ENCODE measurements at regions of chrX and their contacts with region 1.

Region 1: DNA sequence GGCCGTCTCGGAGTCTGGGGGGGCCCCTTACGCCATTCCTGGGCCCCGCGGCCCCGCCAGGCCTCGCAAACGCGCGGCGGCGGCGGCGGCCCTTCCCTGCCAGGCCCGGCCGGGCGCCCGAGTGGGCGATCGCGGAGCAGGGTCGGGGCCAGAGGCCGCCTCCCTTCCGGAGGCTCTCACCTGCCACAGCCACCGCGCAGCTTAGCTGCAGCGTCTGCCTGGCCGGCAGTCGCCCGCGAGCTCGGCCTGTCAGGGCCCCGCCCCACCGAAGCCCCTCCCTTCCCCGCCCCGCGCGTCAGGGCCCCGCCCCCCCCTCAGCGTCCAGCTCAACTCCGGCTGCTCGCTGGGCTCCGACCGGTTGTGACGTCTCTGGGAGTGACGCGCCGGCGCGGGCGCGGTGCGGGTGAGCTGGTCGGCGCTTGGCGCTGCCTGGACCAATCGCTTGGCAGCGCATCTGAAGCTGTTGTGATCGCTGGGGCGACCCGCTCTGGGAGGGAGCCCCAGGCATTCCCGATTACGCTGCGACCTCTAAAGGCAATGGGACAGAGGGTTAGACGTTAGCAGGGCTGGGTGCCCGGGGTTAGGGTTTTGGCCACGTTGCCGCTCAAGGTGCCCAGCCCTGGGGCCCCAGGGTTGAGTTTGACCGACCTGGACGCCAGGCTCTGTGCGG is at the start of gene SLC10A3:
- DNase-seq: peak; percentile 67
- ATAC-seq: peak; percentile 91
- H3K4me3 ChIP-seq: peak within 1 kb of the TSS; percentile 74
- H3K27ac ChIP-seq: peak within 1 kb of the TSS; percentile 76
- H3K4me1 ChIP-seq: peaks cover under 1% of the 10 kb centered on the region; the same call in 1 of the 2 replicates
- H3K27me3 ChIP-seq: no peaks in the 10 kb centered on the region
- CTCF ChIP-seq: peak in 1 of 3 experiments; percentile 19; a peak in 1 of 6 replicates
- EP300 ChIP-seq: no peak
- POLR2A ChIP-seq: peak; percentile 92
- RAD21 ChIP-seq: no peak
- polyA plus RNA-seq, gene SLC10A3: 1.7 to 3.6 TPM

Region 2: DNA sequence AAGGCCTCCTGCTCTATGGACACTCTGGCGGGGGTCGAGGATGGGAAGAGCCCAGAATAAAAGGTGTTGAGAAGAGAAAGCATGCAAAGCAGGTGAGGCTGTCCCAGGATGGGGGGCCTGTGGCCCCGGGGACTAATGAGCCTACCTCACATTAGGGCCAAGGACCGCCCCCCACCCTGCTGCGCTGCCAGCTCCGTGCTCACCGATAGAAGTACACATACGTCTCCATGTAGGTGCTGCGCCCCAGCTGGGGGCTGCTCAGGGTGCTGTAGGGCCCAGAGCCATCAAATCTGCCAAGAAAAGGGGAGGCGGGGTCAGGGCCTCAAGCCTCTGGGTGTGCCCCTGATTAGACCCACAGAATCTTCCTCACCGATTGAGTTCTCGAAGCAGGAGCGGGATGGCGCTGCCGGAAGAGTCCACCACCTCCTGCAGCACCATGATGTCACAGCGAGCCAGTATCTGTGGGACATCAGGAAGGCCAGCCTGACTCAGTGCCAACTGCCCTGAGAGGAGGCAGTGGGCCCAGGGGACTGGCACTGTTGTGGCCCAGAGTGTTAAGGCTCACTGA is 85.8 kb before region 1 on chrX:
- CTCF ChIA-PET with region 1: interaction called, 5 read pairs
- POLR2A ChIA-PET with region 1: interaction called, 11 read pairs
- RAD21 ChIA-PET with region 1: no interaction called
- SMC1A ChIA-PET with region 1: no interaction called
- in situ Hi-C with region 1: no loop called
- intact Hi-C with region 1: no loop called
- DNase-seq: no peak
- ATAC-seq: no peak
- H3K4me3 ChIP-seq: no peak overlapping the region
- H3K27ac ChIP-seq: no peak overlapping the region
- H3K4me1 ChIP-seq: peaks cover 3% of the 10 kb centered on the region; the same call in 1 of the 2 replicates
- H3K27me3 ChIP-seq: no peaks in the 10 kb centered on the region
- CTCF ChIP-seq: no peak
- EP300 ChIP-seq: no peak
- POLR2A ChIP-seq: no peak
- RAD21 ChIP-seq: no peak

Region 3: GRCh38 chrX:154502989-154503388 is 12.4 kb after region 1 on chrX:
- CTCF ChIA-PET with region 1: interaction called, 5 read pairs
- POLR2A ChIA-PET with region 1: interaction called, 14 read pairs
- RAD21 ChIA-PET with region 1: no interaction called
- SMC1A ChIA-PET with region 1: interaction called, 3 read pairs
- in situ Hi-C with region 1: no loop called
- intact Hi-C with region 1: no loop called
- DNase-seq: no peak
- ATAC-seq: no peak
- H3K4me3 ChIP-seq: no peak overlapping the region
- H3K27ac ChIP-seq: no peak overlapping the region
- H3K4me1 ChIP-seq: no peaks in the 10 kb centered on the region; the same call in 1 of the 2 replicates
- H3K27me3 ChIP-seq: no peaks in the 10 kb centered on the region
- CTCF ChIP-seq: no peak
- EP300 ChIP-seq: no peak
- POLR2A ChIP-seq: no peak
- RAD21 ChIP-seq: no peak

Region 4: GRCh38 chrX:154515878-154516655 is 25.5 kb after region 1 on chrX and contains the start of gene FAM3A:
- CTCF ChIA-PET with region 1: no interaction called
- POLR2A ChIA-PET with region 1: interaction called, 12 read pairs
- RAD21 ChIA-PET with region 1: interaction called, 5 read pairs
- SMC1A ChIA-PET with region 1: interaction called, 4 read pairs
- in situ Hi-C with region 1: no loop called
- intact Hi-C with region 1: no loop called
- DNase-seq: peak; percentile 52
- ATAC-seq: peak; percentile 96
- H3K4me3 ChIP-seq: peak within 1 kb of the TSS; percentile 78
- H3K27ac ChIP-seq: peak within 1 kb of the TSS; percentile 72
- H3K4me1 ChIP-seq: no peaks in the 10 kb centered on the region
- H3K27me3 ChIP-seq: no peaks in the 10 kb centered on the region
- CTCF ChIP-seq: no peak
- EP300 ChIP-seq: no peak
- POLR2A ChIP-seq: peak; percentile 87
- RAD21 ChIP-seq: no peak
- polyA plus RNA-seq, gene FAM3A: 0.29 to 1.1 TPM

Region 5: DNA sequence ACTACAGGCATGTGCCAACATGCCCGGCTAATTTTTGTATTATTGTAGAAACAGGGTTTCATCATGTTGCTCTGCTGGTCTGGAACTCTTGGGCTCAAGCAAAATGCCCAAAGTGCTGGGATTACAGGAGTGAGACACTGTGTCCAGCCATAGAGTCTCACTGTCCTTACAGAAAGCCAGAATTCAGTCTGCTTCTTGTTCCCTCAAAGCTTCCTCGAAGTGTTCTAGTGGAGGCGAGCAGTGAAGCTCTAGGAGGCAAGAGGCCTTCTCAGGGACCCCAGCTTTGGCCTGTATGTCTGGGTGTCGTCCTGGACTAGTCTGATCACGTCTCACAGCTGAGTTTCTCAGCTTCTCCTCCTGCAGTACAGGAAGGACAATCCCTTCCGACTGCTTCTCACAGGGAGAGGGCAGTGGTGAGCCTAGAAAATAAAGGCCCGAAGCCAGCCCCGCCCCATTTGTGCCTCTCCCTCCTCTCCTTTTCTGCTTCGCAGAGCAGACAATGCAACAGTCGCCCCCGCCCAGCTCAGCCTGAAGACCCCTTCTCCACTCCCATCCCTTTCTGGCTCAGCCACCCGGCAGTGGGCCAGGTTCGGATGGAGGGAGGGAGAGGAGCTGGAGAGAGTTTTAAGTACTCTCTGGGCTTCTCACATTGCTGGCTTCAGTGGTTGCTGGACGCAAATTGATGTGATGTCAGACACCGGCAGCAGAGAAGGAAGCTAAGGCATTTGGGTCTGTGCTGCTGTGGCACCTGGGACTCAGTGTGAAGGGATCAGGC is 36.5 kb after region 1 on chrX:
- CTCF ChIA-PET with region 1: interaction called, 13 read pairs
- POLR2A ChIA-PET with region 1: interaction called, 12 read pairs
- RAD21 ChIA-PET with region 1: interaction called, 7 read pairs
- SMC1A ChIA-PET with region 1: interaction called, 7 read pairs
- in situ Hi-C with region 1: no loop called
- intact Hi-C with region 1: loop called (anchors 1 kb)
- DNase-seq: peak; percentile 36
- ATAC-seq: peak; percentile 95
- H3K4me3 ChIP-seq: no peak overlapping the region
- H3K27ac ChIP-seq: peak overlapping the region; percentile 83
- H3K4me1 ChIP-seq: peaks cover 10% of the 10 kb centered on the region
- H3K27me3 ChIP-seq: no peaks in the 10 kb centered on the region
- CTCF ChIP-seq: peak; percentile 52 to 57 (median 55)
- EP300 ChIP-seq: no peak
- POLR2A ChIP-seq: peak; percentile 68
- RAD21 ChIP-seq: peak; percentile 27; the same call in 1 of the 2 replicates

Region 6: DNA sequence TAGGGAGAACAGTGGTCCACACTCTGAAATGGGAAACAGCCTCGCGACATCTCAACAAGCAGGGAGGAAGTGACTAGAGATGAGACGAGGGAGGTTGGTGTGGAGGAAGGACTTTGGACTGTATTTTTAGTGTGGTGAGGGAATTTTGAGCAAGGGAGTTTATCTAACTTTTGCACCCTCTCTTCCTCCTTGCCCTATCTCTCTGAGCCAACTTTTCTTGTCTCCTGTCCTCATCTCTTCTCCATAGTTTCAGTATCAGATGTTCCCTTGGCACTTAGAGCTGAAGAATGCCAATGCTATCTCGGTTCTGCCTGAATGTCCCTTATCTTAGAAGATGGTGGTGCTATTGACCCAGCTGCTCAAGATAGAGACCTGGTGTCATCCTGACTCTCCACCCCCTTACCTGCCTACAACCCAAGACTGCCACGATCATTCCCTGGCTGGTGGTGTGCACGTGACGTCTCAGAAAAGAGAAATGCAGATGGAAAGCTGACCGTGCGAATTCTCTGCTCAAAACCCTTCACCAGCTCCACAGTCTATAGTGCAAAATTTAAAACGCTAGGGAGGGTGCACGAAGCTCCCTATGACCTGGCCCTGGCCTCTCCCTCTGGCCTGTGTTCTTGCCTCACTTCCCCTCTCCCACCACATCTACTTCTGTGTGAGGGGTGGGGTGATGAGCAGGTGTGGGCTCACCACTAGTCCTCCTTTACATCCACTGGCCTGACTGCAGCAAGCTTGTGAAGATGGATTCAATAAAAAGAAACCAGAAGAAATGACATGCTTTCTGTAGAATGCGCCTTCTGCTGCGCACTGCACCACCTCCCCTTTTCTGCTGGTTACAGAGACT is 293.8 kb after region 1 on chrX:
- CTCF ChIA-PET with region 1: no interaction called
- POLR2A ChIA-PET with region 1: no interaction called
- RAD21 ChIA-PET with region 1: no interaction called
- SMC1A ChIA-PET with region 1: no interaction called
- in situ Hi-C with region 1: no loop called
- intact Hi-C with region 1: no loop called
- DNase-seq: no peak
- ATAC-seq: no peak
- H3K4me3 ChIP-seq: no peak overlapping the region
- H3K27ac ChIP-seq: no peak overlapping the region
- H3K4me1 ChIP-seq: no peaks in the 10 kb centered on the region; the same call in 1 of the 2 replicates
- H3K27me3 ChIP-seq: no peaks in the 10 kb centered on the region
- CTCF ChIP-seq: no peak
- EP300 ChIP-seq: no peak
- POLR2A ChIP-seq: no peak
- RAD21 ChIP-seq: no peak

Measured in GM12878 (cell line).